ENCODE measurements at regions of chr4 and their contacts with region 1.

Region 1: DNA sequence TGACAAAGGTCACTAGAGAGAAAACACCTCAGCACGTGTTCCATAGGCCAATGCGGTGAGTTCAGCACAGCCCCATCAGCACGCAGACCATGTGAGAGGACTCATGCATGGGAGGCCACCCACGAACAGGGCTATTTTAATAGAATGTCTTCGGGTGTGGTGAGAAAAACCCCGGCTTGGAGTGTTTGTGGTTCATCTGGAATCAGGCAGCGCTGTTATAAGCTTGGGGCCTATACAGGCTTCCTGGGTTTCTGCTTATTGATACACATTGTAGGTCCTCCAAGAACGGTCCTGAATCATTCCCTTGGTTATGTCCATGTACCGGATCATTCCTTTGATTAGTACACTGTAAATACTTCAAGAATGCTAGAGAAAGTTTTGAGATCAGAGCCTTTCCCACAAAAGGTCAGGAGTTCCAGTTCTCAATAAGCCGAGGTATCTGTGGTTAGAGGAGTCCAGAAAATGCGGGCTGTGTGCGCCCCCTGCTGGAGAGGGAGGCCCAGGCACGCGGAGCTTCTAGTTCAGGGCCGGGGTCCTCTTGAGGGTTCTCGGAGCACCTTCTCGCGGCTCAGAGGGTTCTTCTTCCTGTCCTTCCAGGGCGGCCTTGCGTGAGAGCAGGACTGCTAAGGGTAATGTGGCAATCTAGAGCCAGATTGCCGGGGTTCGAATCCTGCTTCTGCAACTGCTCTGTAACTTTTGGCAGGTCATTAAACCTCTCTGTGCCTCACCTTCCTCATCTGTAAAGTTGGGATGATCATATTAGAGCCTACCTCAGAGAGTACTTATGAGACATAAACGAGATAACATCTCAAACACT is 51.8 kb downstream of the TLR10 start:
- DNase-seq: peak; percentile 80
- H3K4me3 Mint-ChIP-seq: no peak overlapping the region
- H3K27ac Mint-ChIP-seq: no peak overlapping the region
- H3K4me1 Mint-ChIP-seq: peaks cover 24% of the 10 kb centered on the region
- H3K27me3 Mint-ChIP-seq: no peaks in the 10 kb centered on the region

Region 2: DNA sequence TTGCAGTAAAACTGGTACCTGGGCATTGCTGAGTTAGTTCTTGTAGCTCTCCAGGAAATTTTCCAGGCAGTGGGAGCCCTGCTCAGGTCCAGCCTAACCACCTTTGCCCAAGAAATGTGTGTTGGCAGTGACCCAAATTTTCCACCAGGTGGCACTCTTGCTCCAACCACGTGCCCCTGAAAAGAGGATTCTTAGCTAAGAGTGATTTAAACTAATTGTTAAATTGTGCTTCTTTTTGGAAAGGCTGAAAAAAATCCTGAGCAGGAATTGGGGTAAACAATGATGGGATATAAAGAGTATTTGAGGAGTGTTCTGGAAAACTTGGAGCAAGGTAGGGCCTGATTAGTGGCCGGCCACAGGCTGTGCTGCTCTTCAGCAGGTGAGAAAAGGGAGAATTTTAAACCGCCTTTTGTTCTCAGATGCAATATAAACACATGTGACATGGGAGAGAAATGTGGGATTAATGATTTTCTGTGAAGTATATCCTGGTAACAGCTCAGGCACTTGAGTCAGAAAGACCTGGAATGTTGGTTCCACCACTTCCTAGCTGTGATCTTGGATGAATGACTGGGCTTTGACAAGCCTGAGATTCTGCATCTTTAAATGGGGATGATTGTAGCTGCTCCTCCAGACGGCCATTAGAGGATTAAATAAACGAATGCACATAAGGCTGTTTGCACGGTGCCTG is 551.2 kb before region 1 on chr4:
- CTCF ChIA-PET with region 1: interaction called, 27 read pairs
- POLR2A ChIA-PET with region 1: no interaction called
- DNase-seq: peak; percentile 75
- H3K4me3 Mint-ChIP-seq: no peak overlapping the region
- H3K27ac Mint-ChIP-seq: peak overlapping the region; percentile 63
- H3K4me1 Mint-ChIP-seq: peaks cover 58% of the 10 kb centered on the region
- H3K27me3 Mint-ChIP-seq: peaks cover 7% of the 10 kb centered on the region

Region 3: GRCh38 chr4:38743866-38744265 is 12.8 kb after region 1 on chr4:
- CTCF ChIA-PET with region 1: interaction called, 13 read pairs
- POLR2A ChIA-PET with region 1: no interaction called
- DNase-seq: no peak
- H3K4me3 Mint-ChIP-seq: no peak overlapping the region
- H3K27ac Mint-ChIP-seq: no peak overlapping the region
- H3K4me1 Mint-ChIP-seq: peaks cover 6% of the 10 kb centered on the region
- H3K27me3 Mint-ChIP-seq: no peaks in the 10 kb centered on the region